Activated T-helper 2 cell treated with anti-CD3 and anti-CD28 coated beads, Interferon-gamma antibody, Interleukin-2, Interleukin-4, amounts not matched to agents 10 μg/mL and 5 μg/mL and 100 μg/mL, durations not matched to agents 14 hours and 24 hours and 36 hours (primary cell): ENCODE measurements at regions of chr1 and their contacts with region 1.

Region 1: DNA sequence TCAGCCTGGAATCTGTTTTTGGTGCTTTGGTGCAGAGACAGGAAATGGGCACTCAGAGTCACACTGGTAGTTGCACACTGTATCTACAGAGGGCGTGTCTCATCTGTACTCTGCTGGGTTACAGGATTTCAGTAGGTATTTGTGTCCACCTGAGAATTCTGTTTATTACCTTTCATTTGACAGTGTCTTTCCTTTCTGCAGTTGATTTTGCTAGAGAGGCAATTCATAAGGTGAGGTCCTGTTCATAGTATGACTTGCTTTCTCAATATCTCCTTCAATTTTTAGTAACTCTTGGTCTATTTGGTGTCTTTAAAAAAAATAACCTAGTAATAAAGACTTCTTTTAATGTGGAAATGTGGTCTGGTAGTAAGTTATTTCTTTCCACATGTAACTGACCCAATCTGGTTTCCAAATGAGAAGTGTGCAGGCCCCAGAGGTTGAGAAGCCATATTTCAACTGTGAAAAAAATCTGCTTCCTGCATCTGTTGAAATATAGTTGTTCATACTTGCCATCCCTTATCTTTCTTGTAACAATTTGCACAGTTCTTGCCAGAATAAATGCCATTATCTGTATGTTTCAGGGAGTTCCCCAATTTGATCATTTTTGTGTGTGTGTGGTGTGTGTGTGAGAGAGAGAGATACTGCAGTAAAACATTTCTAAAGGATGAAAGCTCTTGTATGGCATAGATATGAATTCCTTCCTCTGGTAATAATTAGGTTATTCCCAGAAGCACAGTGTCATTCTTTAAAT is 78.4 kb upstream of the DNAJC6 start:
- DNase-seq: no peak
- H3K4me3 Mint-ChIP-seq: peak overlapping the region; percentile 26
- H3K27ac Mint-ChIP-seq: peak overlapping the region; percentile 79
- H3K4me1 Mint-ChIP-seq: peaks cover 34% of the 10 kb centered on the region
- H3K27me3 Mint-ChIP-seq: no peaks in the 10 kb centered on the region

Region 2: DNA sequence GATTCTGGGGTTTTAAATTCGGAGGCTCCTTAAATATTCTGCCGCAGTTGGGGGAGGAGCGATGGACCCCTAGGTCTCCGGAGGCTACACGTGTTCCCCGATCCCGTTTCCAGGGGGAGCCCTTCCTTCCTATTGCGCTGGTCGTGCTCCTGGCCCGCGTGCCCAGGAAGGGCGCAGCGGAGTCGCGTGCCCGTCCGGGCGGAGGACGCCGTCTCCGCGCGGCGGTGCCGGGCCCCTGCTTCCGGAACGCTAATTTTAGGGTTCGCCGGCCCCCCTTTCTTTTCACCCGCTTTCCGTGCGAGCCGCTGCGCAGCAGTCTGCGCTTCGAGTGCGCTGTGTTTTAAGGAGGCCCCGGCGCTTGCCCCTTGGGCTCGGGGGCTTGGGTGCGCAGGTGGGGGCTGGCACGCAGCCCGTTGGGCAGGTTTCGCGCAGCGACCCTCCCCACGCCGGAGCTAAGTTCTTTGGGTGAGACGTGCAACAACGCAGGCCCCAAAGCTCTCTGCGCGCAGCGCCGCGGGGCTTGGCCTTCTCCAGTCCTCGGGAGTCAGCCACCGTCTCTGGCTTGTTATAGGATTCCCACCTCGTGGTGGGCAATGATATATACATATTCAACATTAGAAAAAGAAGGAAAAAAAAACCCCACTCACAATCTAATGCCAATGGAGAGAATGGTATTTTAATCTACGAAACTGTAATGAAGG is 34.9 kb after region 1 on chr1:
- intact Hi-C with region 1: loop called (anchors 2 kb)
- DNase-seq: peak; percentile 17
- H3K4me3 Mint-ChIP-seq: peak overlapping the region; percentile 57
- H3K27ac Mint-ChIP-seq: no peak overlapping the region
- H3K4me1 Mint-ChIP-seq: peaks cover 28% of the 10 kb centered on the region
- H3K27me3 Mint-ChIP-seq: peaks cover 48% of the 10 kb centered on the region

Region 3: GRCh38 chr1:65393347-65393746 is 162.4 kb after region 1 on chr1:
- intact Hi-C with region 1: loop called (anchors 2 kb)
- DNase-seq: peak; percentile 13
- H3K4me3 Mint-ChIP-seq: no peak overlapping the region
- H3K27ac Mint-ChIP-seq: peak overlapping the region; percentile 62
- H3K4me1 Mint-ChIP-seq: peaks cover 80% of the 10 kb centered on the region
- H3K27me3 Mint-ChIP-seq: no peaks in the 10 kb centered on the region

Region 4: DNA sequence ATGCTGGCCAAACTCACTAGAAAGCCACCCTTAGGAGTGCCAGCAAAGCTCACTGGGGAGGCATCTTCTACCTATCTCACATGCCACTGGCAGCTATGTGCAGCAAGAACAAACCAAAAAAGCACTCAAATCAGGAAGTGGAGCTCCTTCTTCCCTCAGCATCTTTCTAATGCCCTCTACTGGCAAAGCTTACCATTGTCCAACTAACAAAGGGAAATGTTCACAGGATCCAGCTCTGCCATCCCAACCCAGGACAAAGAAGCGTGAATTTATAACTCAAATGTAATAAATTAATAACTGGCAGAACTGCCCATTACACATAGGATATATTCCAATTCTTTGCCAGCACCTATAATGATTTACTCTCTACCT is 228.5 kb after region 1 on chr1:
- intact Hi-C with region 1: loop called (anchors 1 kb)
- DNase-seq: no peak
- H3K4me3 Mint-ChIP-seq: no peak overlapping the region
- H3K27ac Mint-ChIP-seq: no peak overlapping the region
- H3K4me1 Mint-ChIP-seq: peaks cover 12% of the 10 kb centered on the region
- H3K27me3 Mint-ChIP-seq: peaks cover 3% of the 10 kb centered on the region